ENCODE measurements at regions of chr3 and their contacts with region 1.

Region 1: GRCh38 chr3:137032465-137033120 is 74.8 kb downstream of the IL20RB start:
- DNase-seq: peak; percentile 80
- H3K4me3 ChIP-seq: peak overlapping the region; percentile 32 to 51
- H3K27ac ChIP-seq: no peak overlapping the region
- H3K4me1 ChIP-seq: peaks cover 0 to 4% of the 10 kb centered on the region in 2 experiments; a peak in 1 of 4 replicates
- H3K27me3 ChIP-seq: no peaks in the 10 kb centered on the region
- CTCF ChIP-seq: peak; percentile 79
- EP300 ChIP-seq: no peak
- RAD21 ChIP-seq: peak; percentile 81

Region 2: GRCh38 chr3:137020315-137020714 is 12.3 kb before region 1 on chr3:
- CTCF ChIA-PET with region 1: interaction called, 14 read pairs
- POLR2A ChIA-PET with region 1: no interaction called
- DNase-seq: no peak
- H3K4me3 ChIP-seq: no peak overlapping the region
- H3K27ac ChIP-seq: no peak overlapping the region
- H3K4me1 ChIP-seq: no peaks in the 10 kb centered on the region
- H3K27me3 ChIP-seq: no peaks in the 10 kb centered on the region; the same call in 1 of the 2 replicates
- CTCF ChIP-seq: no peak
- EP300 ChIP-seq: no peak
- RAD21 ChIP-seq: no peak

Region 3: DNA sequence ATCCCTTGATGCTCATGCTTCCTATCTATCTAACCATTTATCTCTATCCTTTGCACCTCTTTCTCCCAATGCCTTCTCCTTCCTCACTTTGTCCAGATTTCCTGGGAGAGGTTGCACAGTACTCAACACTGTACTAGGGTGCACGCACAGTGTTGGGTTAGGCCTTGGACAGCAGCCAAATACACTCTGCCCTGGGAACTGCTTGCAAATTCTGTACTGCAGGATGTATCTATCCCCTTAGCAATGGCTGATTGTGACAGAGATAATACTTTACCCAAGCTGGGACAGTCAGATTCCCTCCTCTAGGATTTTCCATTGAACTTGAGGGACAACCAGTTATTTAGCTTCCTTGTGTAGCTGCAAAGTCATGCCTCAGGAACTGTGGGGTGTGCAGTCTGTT is 38.5 kb after region 1 on chr3:
- CTCF ChIA-PET with region 1: interaction called, 12 read pairs
- POLR2A ChIA-PET with region 1: no interaction called
- DNase-seq: peak; percentile 14
- H3K4me3 ChIP-seq: no peak overlapping the region
- H3K27ac ChIP-seq: no peak overlapping the region
- H3K4me1 ChIP-seq: 0 out of 4 replicates have a peak, but pooled peaks cover 0 to 3% of the 10 kb centered on the region in 2 experiments
- H3K27me3 ChIP-seq: no peaks in the 10 kb centered on the region
- CTCF ChIP-seq: no peak
- EP300 ChIP-seq: no peak
- RAD21 ChIP-seq: no peak

Region 4: DNA sequence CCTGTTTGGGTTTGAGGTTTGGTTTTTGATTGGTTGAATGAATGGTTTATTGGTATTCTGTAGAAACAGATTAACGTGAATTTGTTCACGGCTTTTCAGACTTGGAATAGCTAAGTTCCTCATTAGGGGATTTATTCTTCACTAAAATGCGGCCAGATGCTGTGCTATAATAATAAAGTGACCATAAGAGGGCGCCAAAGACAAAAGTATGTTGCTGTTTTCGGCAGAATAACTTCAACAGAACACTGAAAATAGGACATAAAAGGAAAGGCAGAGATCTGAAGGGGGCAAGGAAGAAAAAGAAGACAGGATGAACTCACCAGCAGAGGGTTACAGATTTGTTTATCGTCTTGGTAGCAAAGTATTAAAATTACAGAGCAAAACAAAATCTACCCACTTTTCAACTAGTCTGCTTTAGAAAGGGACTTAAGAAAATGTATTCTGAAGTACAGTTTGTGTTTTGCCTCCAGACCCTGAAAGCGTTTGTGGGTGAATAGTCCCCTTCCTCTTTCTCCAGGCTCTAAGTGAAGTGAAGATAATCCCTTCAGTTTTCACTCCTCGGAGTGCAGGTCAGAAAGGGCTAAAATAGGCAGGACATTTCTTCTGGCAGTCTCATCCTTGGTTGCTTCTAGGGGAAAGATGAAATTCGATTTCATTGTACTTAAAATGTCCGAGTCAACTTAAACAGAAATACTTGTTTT is 72.8 kb after region 1 on chr3:
- CTCF ChIA-PET with region 1: interaction called, 21 read pairs
- POLR2A ChIA-PET with region 1: no interaction called
- DNase-seq: peak; percentile 35
- H3K4me3 ChIP-seq: peak overlapping the region in 1 of 2 experiments; percentile 29; a peak in 1 of 4 replicates
- H3K27ac ChIP-seq: no peak overlapping the region
- H3K4me1 ChIP-seq: no peaks in the 10 kb centered on the region
- H3K27me3 ChIP-seq: no peaks in the 10 kb centered on the region
- CTCF ChIP-seq: peak; percentile 83
- EP300 ChIP-seq: no peak
- RAD21 ChIP-seq: peak; percentile 92

Region 5: DNA sequence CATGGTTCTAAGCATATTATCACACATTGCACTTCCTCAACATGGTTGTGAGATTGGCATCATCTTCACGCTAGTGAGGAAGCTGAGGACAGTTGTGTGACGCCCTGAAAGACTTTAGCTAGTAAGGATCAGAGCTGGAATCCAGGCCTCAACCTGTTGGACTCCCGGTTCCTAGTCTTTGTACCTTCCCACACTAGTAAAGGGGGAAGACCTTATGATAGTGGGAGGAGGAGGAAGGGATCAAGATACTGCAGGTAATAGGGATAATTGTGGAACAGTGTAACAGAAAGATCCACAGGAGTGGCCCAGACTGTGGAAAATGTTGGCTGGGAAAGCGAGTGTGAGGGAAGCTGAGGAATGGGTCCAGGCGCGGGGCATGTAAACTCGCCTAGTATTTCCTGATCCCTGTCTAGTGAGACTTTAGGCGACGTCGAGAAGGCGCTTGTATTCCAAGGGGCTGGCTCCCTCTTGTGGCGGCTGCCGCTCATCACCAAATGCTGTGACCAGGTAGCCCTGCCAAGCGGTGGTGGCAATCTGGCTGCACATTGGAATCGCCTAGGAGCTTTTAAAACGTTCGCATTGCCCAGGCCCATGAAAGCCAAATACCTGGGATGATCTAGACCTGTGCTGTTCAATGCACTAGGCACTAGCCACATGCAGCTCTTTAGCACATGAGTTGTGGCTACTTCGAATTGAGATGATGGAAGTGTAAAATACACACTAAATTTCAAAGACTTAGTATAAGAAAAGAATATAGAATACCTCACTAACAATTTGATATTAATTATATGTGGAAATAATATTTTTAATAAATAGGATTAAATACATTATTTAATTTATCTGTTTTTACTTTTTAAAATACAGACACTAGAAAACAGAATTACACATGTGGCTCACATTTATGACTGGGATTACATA is 938.6 kb after region 1 on chr3:
- CTCF ChIA-PET with region 1: interaction called, 21 read pairs
- POLR2A ChIA-PET with region 1: no interaction called
- DNase-seq: peak; percentile 72
- H3K4me3 ChIP-seq: peak overlapping the region in 1 of 2 experiments; percentile 40; a peak in 3 of 4 replicates
- H3K27ac ChIP-seq: no peak overlapping the region
- H3K4me1 ChIP-seq: peaks cover 0 to 3% of the 10 kb centered on the region in 2 experiments; a peak in 1 of 4 replicates
- H3K27me3 ChIP-seq: no peaks in the 10 kb centered on the region
- CTCF ChIP-seq: peak; percentile 85
- EP300 ChIP-seq: no peak
- RAD21 ChIP-seq: peak; percentile 91